ENCODE measurements at regions of chr22 and their contacts with region 1.

Region 1: DNA sequence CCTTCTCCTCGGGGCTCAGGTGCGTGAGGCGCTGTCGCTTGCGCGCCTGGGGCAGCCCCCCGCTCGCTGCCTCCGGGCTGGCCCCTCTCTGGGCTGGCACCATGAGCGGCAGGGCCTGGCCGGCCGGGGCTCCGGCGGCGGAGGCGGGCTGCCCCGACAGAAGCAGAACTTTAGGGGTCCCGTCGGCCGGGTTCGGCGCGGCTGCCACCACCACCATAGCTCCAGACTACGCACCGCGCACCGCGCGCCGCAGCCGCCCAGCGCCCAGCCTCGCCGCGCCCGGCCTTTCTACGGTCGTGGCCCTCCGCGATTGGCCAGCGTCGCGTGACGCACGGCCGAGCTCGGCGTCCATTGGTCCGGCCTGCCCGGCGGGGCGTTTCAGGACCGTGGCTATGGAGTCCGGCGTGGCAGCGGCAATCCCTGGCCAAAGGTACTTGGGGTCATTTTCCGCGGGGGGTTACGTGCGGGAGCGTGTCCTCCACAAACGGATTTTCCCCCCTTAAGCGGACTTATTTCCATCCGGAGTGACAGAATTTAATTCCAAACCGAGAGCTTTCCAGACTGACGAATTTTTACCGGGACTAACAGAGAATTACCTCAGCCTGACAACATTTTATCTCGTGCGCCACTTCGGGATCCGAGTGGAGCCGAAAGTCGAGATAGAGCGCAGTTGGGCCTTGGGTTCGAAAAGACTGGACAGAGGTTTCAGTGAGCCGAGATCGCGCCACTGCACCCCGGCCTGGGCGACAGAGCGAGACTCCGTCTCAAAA is at the start of gene XBP1:
- DNase-seq: peak; percentile 96
- CTCF ChIP-seq: no peak

Region 2: GRCh38 chr22:28817919-28818909 is 17.7 kb after region 1 on chr22:
- CTCF ChIA-PET with region 1: interaction called, 16 read pairs
- POLR2A ChIA-PET with region 1: interaction called, 12 read pairs
- DNase-seq: no peak
- CTCF ChIP-seq: no peak

Measured in GM10248 (cell line).